Vagina (tissue), 2 donors: ENCODE measurements at regions of chrX and their contacts with region 1.

Region 1: DNA sequence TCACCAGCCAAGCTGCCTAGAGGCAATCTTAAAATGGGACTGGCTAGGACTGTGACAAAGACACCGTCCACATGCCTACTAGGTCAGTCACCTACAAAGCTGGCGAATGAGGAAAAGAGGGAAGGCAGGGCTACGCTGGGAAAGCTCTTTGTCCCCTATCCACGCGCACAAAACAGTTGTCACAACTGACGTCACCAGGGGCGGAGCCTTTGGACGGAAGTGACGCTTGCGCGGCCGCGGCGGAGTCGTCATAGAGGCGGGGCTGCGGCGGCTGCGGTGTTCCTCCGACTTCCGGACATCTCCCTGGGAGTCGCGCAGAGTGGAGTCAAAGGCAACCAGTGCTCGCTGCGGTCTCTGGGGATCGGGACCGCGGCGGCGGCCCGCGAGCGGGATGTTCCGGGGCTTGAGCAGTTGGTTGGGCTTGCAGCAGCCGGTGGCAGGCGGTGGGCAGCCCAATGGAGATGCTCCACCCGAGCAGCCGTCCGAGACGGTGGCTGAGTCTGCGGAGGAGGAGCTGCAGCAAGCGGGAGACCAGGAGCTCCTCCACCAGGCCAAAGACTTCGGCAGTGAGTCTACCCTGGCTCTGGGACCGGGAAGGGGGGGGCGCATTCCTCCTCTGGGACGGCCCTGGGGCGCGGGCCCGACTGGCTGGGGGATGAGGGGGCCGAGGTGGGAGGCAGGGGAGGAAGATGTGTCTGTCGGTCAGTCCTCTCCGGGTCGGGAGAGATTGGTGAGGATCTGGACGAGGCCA is at the start of gene SYAP1:
- DNase-seq: peak; percentile 99
- H3K4me3 ChIP-seq: peak within 1 kb of the TSS; percentile 91 to 98
- H3K27ac ChIP-seq: peak within 1 kb of the TSS; percentile 92
- H3K4me1 ChIP-seq: peaks cover 27% of the 10 kb centered on the region
- H3K27me3 ChIP-seq: no peaks in the 10 kb centered on the region
- CTCF ChIP-seq: no peak
- POLR2A ChIP-seq: peak in 1 of 2 donors; percentile 84
- total RNA-seq, gene SYAP1: 16.0 TPM

Region 2: GRCh38 chrX:16664074-16664473 is 55.4 kb before region 1 on chrX:
- intact Hi-C with region 1: no loop called
- DNase-seq: no peak
- H3K4me3 ChIP-seq: no peak overlapping the region
- H3K27ac ChIP-seq: no peak overlapping the region
- H3K4me1 ChIP-seq: no peaks in the 10 kb centered on the region
- H3K27me3 ChIP-seq: no peaks in the 10 kb centered on the region
- CTCF ChIP-seq: no peak
- POLR2A ChIP-seq: no peak

Region 3: DNA sequence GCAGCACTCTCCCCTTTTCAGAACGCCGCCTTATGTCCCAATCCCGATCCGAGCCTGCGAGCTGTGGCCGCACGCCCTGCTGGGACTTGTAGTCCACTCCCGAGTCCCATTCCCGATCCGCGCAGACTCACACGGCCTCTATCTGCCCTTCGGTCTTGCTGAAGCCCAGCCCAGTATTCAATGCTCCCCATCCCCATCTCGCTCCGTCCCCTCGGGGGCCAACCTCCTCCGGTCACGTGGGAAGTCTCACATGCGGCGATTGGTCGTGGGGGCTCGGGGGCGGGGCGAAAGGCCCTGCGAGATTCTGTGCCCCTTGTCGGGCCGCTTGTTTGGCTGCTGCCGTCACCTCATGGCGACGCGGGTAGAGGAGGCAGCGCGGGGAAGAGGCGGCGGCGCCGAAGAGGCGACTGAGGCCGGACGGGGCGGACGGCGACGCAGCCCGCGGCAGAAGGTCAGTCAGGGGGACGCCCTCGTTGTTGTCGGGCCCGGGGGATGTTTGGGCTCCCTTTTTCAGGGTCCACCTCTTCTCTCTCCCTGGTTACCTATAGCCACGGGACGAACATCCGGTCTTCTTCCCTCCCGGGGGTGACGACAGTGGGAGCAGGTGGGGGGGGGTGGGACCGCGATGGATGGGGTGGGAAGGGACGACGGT is 66.8 kb after region 1 on chrX and contains the start of gene TXLNG:
- intact Hi-C with region 1: loop called (anchors 5 kb)
- DNase-seq: peak; percentile 100
- H3K4me3 ChIP-seq: peak within 1 kb of the TSS; percentile 94 to 97
- H3K27ac ChIP-seq: peak within 1 kb of the TSS; percentile 90
- H3K4me1 ChIP-seq: peaks cover 11% of the 10 kb centered on the region
- H3K27me3 ChIP-seq: no peaks in the 10 kb centered on the region
- CTCF ChIP-seq: peak in 1 of 3 experiments; percentile 9
- POLR2A ChIP-seq: peak in 1 of 2 donors; percentile 89
- total RNA-seq, gene TXLNG: 15.2 TPM

Region 4: GRCh38 chrX:16870095-16870860 is 150.8 kb after region 1 on chrX and contains the start of gene RBBP7:
- intact Hi-C with region 1: loop called (anchors 10 kb)
- DNase-seq: peak in 1 of 2 donors; percentile 92
- H3K4me3 ChIP-seq: peak within 1 kb of the TSS; percentile 48 to 50
- H3K27ac ChIP-seq: peak within 1 kb of the TSS; percentile 79
- H3K4me1 ChIP-seq: peaks cover 36% of the 10 kb centered on the region
- H3K27me3 ChIP-seq: no peaks in the 10 kb centered on the region
- CTCF ChIP-seq: peak in 1 of 3 experiments; percentile 16
- POLR2A ChIP-seq: peak in 1 of 2 donors; percentile 83
- total RNA-seq, gene RBBP7: 57.9 TPM